Tibial artery (tissue), 4 donors: ENCODE measurements at regions of chr15 and their contacts with region 1.

Region 1: GRCh38 chr15:63600616-63601025 is 3.4 kb downstream of the FBXL22 start:
- DNase-seq: peak; percentile 77 to 92
- H3K4me3 ChIP-seq: peak overlapping the region; percentile 66 to 79
- H3K27ac ChIP-seq: peak overlapping the region; percentile 85 to 89
- H3K4me1 ChIP-seq: peaks cover 0 to 75% (median 45%) of the 10 kb centered on the region in 4 donors
- H3K27me3 ChIP-seq: no peaks in the 10 kb centered on the region
- CTCF ChIP-seq: no peak

Region 2: DNA sequence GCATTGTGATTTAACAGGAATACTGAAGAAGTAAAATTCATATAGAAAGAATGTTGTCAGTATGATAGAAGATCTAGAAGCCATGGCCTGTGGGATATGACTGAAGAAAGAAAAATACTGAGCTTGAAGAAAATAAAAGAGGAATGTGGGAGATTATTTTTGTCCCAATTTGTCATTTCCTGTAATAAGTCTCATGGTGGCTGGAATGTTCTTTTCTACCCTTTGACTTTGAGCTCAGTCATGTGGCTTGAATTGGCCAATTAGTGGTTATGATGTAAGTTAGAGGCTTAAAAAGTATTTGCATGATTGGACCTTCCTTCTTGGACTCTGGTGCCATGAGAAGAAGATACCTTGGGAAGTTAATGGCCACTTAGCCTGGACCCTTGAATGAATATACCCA is 309.1 kb before region 1 on chr15:
- intact Hi-C with region 1: loop called (anchors 10 kb)
- DNase-seq: no peak
- H3K4me3 ChIP-seq: no peak overlapping the region
- H3K27ac ChIP-seq: peak overlapping the region; percentile 57 to 70
- H3K4me1 ChIP-seq: peaks cover 0 to 29% (median 15%) of the 10 kb centered on the region in 4 donors
- H3K27me3 ChIP-seq: no peaks in the 10 kb centered on the region
- CTCF ChIP-seq: peak in 1 of 2 experiments; percentile 10

Region 3: DNA sequence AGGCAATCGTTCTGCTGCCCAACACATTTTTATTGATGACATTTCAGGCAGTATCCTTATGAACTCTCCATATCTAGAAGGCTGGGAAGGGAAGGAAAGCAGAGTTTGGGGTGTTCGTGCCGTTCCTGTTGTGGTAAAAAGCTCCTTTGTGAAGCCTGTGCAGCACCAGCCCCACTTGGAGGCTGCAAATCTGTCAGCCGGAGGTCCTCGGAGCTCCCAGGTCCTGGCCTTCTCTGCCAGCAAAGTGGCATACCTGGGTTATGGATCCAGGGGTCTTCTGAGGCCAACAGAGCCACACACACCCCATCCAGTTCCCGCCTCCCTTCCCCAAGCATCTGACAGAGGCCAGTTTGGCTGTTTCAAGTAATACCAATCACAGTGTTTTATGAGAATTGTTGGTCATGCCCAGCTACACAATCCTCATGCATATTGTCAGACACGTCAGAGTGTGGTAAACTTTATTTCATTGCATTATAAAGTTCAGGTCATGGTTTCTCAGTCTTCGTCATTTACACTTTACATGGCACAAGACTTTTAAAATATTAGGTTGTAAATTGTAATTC is 112.1 kb before region 1 on chr15:
- intact Hi-C with region 1: loop called (anchors 2 kb)
- DNase-seq: no peak
- H3K4me3 ChIP-seq: no peak overlapping the region
- H3K27ac ChIP-seq: no peak overlapping the region
- H3K4me1 ChIP-seq: peaks cover 0 to 6% (median 0%) of the 10 kb centered on the region in 4 donors
- H3K27me3 ChIP-seq: no peaks in the 10 kb centered on the region
- CTCF ChIP-seq: no peak

Region 4: GRCh38 chr15:63504247-63504978 is 96.2 kb before region 1 on chr15 and contains the start of gene USP3:
- intact Hi-C with region 1: loop called (anchors 5 kb)
- DNase-seq: peak; percentile 93 to 98
- H3K4me3 ChIP-seq: peak within 1 kb of the TSS; percentile 84 to 93
- H3K27ac ChIP-seq: peak within 1 kb of the TSS; percentile 89 to 98
- H3K4me1 ChIP-seq: peaks cover 0 to 69% (median 47%) of the 10 kb centered on the region in 4 donors
- H3K27me3 ChIP-seq: no peaks in the 10 kb centered on the region
- CTCF ChIP-seq: peak; percentile 35 to 59

Region 5: GRCh38 chr15:64067564-64068030 is 467.0 kb after region 1 on chr15:
- intact Hi-C with region 1: loop called (anchors 10 kb)
- DNase-seq: peak; percentile 59 to 73
- H3K4me3 ChIP-seq: no peak overlapping the region
- H3K27ac ChIP-seq: no peak overlapping the region
- H3K4me1 ChIP-seq: peaks cover 0 to 26% (median 22%) of the 10 kb centered on the region in 4 donors
- H3K27me3 ChIP-seq: no peaks in the 10 kb centered on the region
- CTCF ChIP-seq: peak; percentile 79 to 85